ENCODE measurements at regions of chr3 and their contacts with region 1.

Region 1: DNA sequence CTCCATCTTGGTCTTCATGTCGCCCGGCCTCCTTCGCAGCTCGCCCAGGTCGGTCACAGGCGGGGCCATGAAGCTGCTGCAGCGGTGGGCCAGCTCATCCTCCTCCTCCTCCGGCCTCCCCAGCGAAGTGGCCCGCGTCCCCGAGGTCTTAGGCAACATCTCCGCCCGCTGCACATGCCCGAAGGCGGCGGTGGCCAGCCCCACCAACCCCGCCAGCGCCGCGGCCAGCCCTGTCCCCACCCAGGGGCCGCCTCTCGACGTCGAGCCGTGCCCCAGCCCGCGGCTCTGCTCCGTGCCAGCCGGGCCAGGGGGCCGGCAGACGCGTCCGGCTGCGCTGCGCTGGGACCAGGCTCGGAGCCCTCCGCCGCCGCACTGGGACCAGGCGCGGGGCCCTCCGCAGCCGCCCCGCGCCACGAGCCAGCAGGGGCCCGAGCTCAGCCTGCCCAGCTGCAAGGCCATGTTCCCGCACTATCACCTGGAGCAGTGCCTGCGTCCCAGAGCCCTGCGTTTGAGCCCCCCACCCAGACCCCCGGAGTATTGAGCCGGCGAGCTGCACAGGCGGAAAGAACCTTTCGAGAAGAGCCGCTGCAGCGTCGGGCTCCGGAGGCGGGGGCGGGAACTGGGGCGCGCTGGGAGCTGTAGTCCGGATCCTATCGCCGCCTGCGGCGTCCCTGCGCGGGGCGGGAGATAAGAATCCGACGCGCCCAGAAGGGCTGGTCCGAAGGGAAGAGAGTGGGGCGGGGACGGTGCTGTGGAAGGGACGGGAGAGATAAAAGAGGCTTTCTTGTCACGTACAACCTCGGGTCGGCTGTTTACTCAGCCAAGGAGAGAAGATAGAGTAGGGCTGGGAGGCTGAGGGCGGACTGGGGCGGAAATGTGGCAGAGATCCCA is at the start of gene CPOX:
- DNase-seq: peak; percentile 92
- H3K4me3 Mint-ChIP-seq: peak within 1 kb of the TSS; percentile 94
- H3K27ac Mint-ChIP-seq: peak within 1 kb of the TSS; percentile 87
- H3K4me1 Mint-ChIP-seq: peaks cover 49% of the 10 kb centered on the region
- H3K27me3 Mint-ChIP-seq: no peaks in the 10 kb centered on the region
- total RNA-seq, gene CPOX: 75.9 to 78.0 TPM

Region 2: DNA sequence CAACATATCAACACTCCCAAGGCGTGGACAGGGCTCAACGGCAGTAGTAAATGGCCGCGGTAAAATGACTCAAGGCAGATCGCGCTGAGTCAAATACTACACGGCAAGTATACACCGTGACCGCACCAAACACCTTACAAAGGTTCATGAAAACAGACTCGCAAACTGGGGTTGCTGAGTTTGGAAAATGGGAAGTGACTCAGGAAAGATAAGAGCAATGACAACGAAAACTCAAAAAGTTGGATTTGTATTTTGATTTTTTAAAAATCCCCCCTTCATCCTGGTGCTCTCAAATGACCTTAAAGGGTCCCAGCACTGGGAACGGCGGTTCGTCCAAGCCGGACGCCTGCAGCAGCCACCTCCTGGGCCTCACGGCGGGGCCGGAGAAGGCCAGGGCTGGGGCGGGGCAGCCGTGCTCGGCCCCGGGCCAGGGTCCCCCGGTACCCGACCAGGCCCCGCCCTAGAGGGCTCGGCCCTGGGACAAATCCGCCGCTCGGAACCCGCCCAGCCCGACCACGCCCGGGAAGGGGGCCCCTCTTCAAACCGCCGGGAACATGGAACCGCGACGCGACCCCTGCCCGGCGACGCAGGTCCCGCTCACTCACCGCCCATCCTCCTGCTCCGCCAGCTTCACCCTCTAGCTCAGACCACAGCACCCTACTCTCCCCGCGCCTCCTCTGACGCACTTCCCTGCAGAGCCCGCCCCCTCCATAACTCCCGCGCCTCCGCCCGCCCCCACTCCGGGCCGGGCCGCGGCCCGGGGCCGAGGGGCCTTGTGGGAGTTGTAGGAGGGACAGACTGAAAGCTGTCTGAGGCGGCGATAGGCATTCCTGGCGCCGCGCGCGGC is 70.8 kb before region 1 on chr3 and contains the start of gene CLDND1:
- CTCF ChIA-PET with region 1: interaction called, 12 read pairs
- POLR2A ChIA-PET with region 1: interaction called, 101 read pairs
- DNase-seq: peak; percentile 98
- H3K4me3 Mint-ChIP-seq: peak within 1 kb of the TSS; percentile 98
- H3K27ac Mint-ChIP-seq: peak within 1 kb of the TSS; percentile 92
- H3K4me1 Mint-ChIP-seq: peaks cover 74% of the 10 kb centered on the region
- H3K27me3 Mint-ChIP-seq: no peaks in the 10 kb centered on the region
- total RNA-seq, gene CLDND1: 673 to 683 TPM

Region 3: DNA sequence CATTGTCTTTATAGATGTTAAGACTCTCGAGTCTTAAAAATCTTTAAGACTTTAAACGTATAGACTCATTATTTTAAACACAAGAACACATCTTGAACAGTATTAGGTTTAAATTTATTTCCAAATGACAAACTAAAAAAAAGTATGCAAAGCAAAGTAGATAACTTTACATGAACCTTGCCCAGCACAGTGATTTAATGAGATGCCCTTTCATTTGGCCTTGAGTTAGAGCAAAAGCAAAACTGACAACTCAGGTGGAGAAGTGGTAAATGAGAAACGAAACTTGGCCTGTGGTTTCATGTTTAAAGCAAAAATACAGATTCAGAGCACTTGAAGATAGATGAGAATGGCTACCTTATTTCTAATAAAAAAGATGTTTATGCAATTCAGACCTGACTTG is 52.9 kb before region 1 on chr3:
- CTCF ChIA-PET with region 1: interaction called, 4 read pairs
- POLR2A ChIA-PET with region 1: interaction called, 41 read pairs
- DNase-seq: no peak
- H3K4me3 Mint-ChIP-seq: peak overlapping the region; percentile 23
- H3K27ac Mint-ChIP-seq: peak overlapping the region; percentile 80
- H3K4me1 Mint-ChIP-seq: peaks cover 71% of the 10 kb centered on the region
- H3K27me3 Mint-ChIP-seq: no peaks in the 10 kb centered on the region

Region 4: GRCh38 chr3:98563661-98564281 is 29.5 kb before region 1 on chr3:
- CTCF ChIA-PET with region 1: interaction called, 4 read pairs
- POLR2A ChIA-PET with region 1: interaction called, 94 read pairs
- DNase-seq: no peak
- H3K4me3 Mint-ChIP-seq: peak overlapping the region; percentile 50
- H3K27ac Mint-ChIP-seq: peak overlapping the region; percentile 90
- H3K4me1 Mint-ChIP-seq: peaks cover 91% of the 10 kb centered on the region
- H3K27me3 Mint-ChIP-seq: no peaks in the 10 kb centered on the region